Activated T-helper 2 cell treated with anti-CD3 and anti-CD28 coated beads, Interferon-gamma antibody, Interleukin-2, Interleukin-4, amounts not matched to agents 10 μg/mL and 5 μg/mL and 100 μg/mL, durations not matched to agents 14 hours and 24 hours and 36 hours (primary cell): ENCODE measurements at regions of chr4 and their contacts with region 1.

Region 1: DNA sequence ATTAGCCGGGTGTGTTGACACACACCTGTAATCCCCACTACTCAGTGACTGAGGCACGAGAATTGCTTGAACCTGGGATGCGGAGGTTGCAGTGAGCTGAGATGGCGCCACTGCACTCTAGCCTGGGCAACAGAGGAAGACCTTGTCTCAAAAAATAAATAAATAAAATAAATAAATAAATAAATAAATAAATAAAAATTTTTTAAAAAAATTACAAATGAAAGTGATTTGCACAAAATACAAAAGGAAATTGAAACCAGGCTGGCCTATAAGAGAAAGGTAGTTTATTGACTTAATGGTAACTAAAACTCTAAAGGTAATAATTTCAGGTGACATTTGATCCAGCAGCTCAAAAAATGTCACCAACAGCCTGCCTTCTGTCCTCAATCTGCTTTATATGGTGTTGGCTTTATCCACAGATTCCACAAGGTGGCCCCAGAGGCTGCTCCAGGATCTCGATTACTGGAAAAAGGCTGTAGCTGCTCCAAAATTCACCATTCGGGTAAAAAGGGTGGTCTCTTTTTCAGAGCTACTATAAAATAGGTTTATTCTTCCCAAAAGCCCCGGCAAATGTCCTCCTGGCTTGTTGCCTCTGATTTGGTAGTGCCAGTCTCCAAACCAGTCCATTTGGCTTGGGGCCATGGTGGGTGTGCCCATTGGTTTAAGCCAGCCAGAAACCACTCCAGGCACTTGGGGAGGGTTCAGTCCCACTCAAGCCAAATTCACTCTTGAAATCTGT is 61.4 kb upstream of the TRIM2 start:
- DNase-seq: no peak
- H3K4me3 Mint-ChIP-seq: no peak overlapping the region
- H3K27ac Mint-ChIP-seq: no peak overlapping the region
- H3K4me1 Mint-ChIP-seq: peaks cover 5% of the 10 kb centered on the region
- H3K27me3 Mint-ChIP-seq: peaks cover 26% of the 10 kb centered on the region

Region 2: GRCh38 chr4:153204247-153205027 is 61.6 kb after region 1 on chr4 and contains the start of gene TRIM2:
- intact Hi-C with region 1: no loop called
- DNase-seq: no peak
- H3K4me3 Mint-ChIP-seq: peak within 1 kb of the TSS; percentile 35
- H3K27ac Mint-ChIP-seq: no peak within 1 kb of the TSS
- H3K4me1 Mint-ChIP-seq: peaks cover 21% of the 10 kb centered on the region
- H3K27me3 Mint-ChIP-seq: peaks cover 4% of the 10 kb centered on the region
- total RNA-seq, gene TRIM2: 0.09 and 0.18 TPM in 2 replicates

Region 3: GRCh38 chr4:153318696-153319320 is 175.9 kb after region 1 on chr4:
- intact Hi-C with region 1: loop called (anchors 1 kb)
- DNase-seq: no peak
- H3K4me3 Mint-ChIP-seq: no peak overlapping the region
- H3K27ac Mint-ChIP-seq: no peak overlapping the region
- H3K4me1 Mint-ChIP-seq: peaks cover 2% of the 10 kb centered on the region
- H3K27me3 Mint-ChIP-seq: peaks cover 9% of the 10 kb centered on the region

Region 4: GRCh38 chr4:153643406-153644383 is 500.8 kb after region 1 on chr4:
- intact Hi-C with region 1: loop called (anchors 10 kb)
- DNase-seq: no peak
- H3K4me3 Mint-ChIP-seq: no peak overlapping the region
- H3K27ac Mint-ChIP-seq: no peak overlapping the region
- H3K4me1 Mint-ChIP-seq: peaks cover 20% of the 10 kb centered on the region
- H3K27me3 Mint-ChIP-seq: no peaks in the 10 kb centered on the region